ENCODE measurements at regions of chr16 and their contacts with region 1.

Region 1: DNA sequence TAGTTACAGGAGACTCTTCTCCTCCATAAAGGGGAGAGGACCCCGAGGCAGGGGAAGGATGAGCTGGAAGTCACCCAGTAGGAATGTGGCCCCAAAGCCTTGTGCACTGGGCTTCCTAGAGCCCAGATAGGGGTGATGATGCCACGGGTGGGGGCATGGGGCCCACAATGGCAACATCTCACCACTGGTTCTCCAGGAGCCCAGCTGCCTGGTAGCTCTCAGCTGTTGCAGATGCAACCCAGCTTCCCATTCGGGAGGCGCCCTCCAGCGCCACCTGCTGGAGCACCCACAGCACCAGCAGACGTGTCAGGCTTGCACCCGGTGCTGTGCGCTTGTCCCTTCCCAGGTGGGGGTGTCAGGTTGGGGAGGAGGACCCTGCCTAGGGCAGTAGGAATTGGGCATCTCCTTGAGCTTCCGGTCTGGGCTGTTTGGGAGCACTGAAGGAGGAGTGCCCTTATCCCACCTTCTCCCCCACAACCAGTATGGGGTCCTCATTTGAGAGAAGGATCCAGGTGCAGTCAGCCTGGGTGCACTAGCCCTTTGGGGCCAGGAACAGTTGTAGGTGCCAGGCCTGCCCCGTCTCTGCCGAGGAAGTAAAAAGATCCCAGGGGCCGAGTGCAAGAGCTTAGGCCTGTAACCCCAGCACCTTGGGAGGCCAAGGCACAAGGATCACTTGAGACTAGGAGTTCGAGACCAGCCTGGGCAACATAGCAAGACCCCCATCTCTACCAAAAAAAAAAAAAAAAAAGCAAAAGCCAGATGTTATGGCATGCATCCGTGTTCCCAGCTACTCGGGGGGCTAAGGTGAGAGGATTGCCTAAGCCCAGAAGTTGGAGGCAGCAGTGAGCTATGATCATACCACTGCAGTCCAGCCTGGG is 14.4 kb downstream of the CDIPT start:
- DNase-seq: no peak
- H3K4me3 ChIP-seq: no peak overlapping the region
- H3K27me3 ChIP-seq: no peaks in the 10 kb centered on the region
- CTCF ChIP-seq: peak; percentile 96

Region 2: DNA sequence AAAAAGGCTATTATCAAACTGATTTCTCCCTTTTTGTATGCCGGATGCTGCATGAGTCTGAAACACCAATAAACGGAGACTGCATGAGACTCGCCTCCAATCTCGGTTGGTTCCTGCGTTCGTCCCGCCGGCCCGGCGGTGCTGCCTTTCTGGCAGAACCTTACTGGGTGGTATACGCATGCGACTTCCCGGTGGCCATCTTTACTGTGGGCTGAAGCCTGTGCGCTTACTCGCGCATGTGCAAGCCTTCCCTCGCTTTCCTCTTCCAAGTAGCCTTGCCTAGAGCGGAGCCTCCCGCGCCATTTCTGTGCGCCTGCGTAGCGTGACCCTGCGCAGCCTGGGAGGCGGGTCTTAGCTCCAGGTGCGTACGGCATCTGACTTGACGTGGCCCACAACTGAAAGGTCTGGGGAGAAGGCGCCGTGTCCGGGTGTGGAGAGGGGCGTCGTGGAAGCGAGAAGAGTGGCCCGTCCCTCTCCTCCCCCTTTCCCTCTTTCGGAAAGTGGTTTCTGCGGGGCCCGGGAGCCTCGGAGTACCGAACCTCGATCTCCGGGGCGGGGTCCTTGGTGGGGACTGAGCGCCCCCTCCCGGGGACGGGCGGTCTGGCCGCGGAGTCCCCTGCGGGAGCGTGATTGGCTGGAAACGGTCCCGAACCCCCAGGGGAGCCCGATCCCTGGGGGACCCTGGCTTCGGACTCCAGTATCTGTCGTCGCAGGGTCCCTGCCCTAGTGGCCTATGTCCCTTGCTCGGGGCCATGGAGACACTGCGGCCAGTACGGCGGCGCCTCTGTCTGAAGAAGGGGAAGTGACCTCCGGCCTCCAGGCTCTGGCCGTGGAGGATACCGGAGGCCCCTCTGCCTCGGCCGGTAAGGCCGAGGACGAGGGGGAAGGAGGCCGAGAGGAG is 32.6 kb before region 1 on chr16 and contains the start of gene PAGR1:
- CTCF ChIA-PET with region 1: interaction called, 81 read pairs
- POLR2A ChIA-PET with region 1: no interaction called
- DNase-seq: peak; percentile 98
- H3K4me3 ChIP-seq: peak within 1 kb of the TSS; percentile 85
- H3K27me3 ChIP-seq: no peaks in the 10 kb centered on the region
- CTCF ChIP-seq: peak; percentile 97
- polyA plus RNA-seq, gene PAGR1: 13.9 and 15.6 TPM in 2 replicates

Region 3: GRCh38 chr16:29825145-29826044 is 23.3 kb before region 1 on chr16:
- CTCF ChIA-PET with region 1: interaction called, 81 read pairs
- POLR2A ChIA-PET with region 1: interaction called, 10 read pairs
- DNase-seq: no peak
- H3K4me3 ChIP-seq: no peak overlapping the region
- H3K27me3 ChIP-seq: no peaks in the 10 kb centered on the region
- CTCF ChIP-seq: no peak

Region 4: GRCh38 chr16:29836623-29837022 is 12.0 kb before region 1 on chr16:
- CTCF ChIA-PET with region 1: interaction called, 16 read pairs
- POLR2A ChIA-PET with region 1: interaction called, 3 read pairs
- DNase-seq: no peak
- H3K4me3 ChIP-seq: no peak overlapping the region
- H3K27me3 ChIP-seq: no peaks in the 10 kb centered on the region
- CTCF ChIP-seq: no peak

Region 5: DNA sequence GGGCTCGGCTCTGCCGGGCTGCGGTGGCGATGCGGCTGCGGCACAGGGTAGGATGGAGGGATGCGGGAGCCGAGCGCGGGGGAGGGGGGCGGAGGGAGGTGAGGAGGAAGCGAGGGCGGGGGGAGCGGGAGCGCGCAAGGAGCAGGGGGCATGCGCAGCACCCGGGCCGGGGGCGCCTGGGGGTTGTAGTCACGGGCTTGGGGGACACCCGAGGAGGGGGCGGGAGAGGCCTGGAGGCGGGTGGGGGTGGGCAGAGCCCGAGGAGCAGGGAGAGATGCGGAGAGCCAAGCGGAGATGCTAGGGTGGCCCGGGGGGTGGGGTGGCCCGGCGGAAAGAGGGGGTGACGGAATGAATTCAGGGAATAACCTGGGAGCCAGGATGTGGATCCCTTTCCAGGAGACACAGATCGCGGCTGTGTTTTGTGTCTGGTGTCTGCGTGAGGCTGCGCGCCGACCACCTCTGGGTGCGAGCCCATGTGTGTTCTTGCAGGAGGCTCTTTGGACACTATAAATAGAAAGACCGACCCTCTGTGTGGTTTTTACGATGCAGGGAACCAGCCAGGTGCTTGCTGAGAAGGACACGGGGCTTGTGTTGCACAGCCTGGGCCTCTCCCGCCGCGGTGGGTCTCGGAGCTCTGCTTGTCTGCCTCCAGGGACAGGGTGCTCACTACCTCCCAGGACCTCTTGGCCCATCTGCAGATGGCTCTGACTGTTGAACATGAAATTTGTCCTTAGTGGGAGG is 1162.1 kb after region 1 on chr16 and contains the start of gene STX1B:
- CTCF ChIA-PET with region 1: no interaction called
- POLR2A ChIA-PET with region 1: no interaction called
- DNase-seq: no peak
- H3K4me3 ChIP-seq: peak within 1 kb of the TSS; percentile 50
- H3K27me3 ChIP-seq: 0 out of 2 replicates have a peak, but pooled peaks cover 2% of the 10 kb centered on the region
- CTCF ChIP-seq: no peak
- polyA plus RNA-seq, gene STX1B: 1.5 and 1.6 TPM in 2 replicates